CD8-positive, alpha-beta memory T cell (primary cell): ENCODE measurements at regions of chr9 and their contacts with region 1.

Region 1: GRCh38 chr9:74773886-74774479 is 113.7 kb downstream of the TRPM6 start:
- DNase-seq: peak; percentile 46 to 75 (median 56)
- H3K4me3 ChIP-seq: no peak overlapping the region
- H3K4me3 Mint-ChIP-seq: no peak overlapping the region
- H3K27ac ChIP-seq: no peak overlapping the region
- H3K27ac Mint-ChIP-seq: no peak overlapping the region
- H3K4me1 ChIP-seq: no peaks in the 10 kb centered on the region
- H3K4me1 Mint-ChIP-seq: no peaks in the 10 kb centered on the region
- H3K27me3 ChIP-seq: no peaks in the 10 kb centered on the region
- H3K27me3 Mint-ChIP-seq: peaks cover 14% of the 10 kb centered on the region in 2 donors

Region 2: DNA sequence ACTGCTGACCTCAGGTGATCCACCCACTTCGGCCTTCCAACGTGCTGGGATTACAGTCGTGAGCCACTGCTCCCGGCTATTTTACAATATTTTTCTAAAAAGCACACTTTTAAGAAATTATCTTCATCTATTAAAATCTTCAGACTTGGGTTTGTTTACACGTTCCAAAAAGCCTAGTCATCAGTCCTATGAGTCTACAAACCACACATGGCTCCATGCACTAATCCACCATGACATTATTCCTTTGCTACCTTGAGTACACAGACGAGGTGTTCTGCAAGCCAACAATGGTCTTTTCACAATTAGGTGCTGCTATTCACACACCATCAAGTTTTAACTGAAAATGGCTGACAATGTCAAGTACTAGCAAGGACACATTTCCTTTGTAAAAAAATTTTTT is 72.8 kb after region 1 on chr9:
- CTCF ChIA-PET with region 1: no interaction called
- POLR2A ChIA-PET with region 1: no interaction called
- DNase-seq: no peak
- H3K4me3 ChIP-seq: no peak overlapping the region
- H3K4me3 Mint-ChIP-seq: no peak overlapping the region
- H3K27ac ChIP-seq: no peak overlapping the region
- H3K27ac Mint-ChIP-seq: no peak overlapping the region
- H3K4me1 ChIP-seq: no peaks in the 10 kb centered on the region
- H3K4me1 Mint-ChIP-seq: peaks cover 0 to 7% (median 0%) of the 10 kb centered on the region in 3 donors
- H3K27me3 ChIP-seq: no peaks in the 10 kb centered on the region
- H3K27me3 Mint-ChIP-seq: peaks cover 6% of the 10 kb centered on the region in 2 donors

Region 3: GRCh38 chr9:75001719-75002422 is 227.9 kb after region 1 on chr9:
- CTCF ChIA-PET with region 1: interaction called, 91 read pairs
- POLR2A ChIA-PET with region 1: no interaction called
- DNase-seq: peak in 2 of 5 donors; percentile 59 to 64
- H3K4me3 ChIP-seq: no peak overlapping the region
- H3K4me3 Mint-ChIP-seq: no peak overlapping the region
- H3K27ac ChIP-seq: no peak overlapping the region
- H3K27ac Mint-ChIP-seq: no peak overlapping the region
- H3K4me1 ChIP-seq: no peaks in the 10 kb centered on the region
- H3K4me1 Mint-ChIP-seq: peaks cover 0 to 10% (median 5%) of the 10 kb centered on the region in 3 donors
- H3K27me3 ChIP-seq: no peaks in the 10 kb centered on the region
- H3K27me3 Mint-ChIP-seq: no peaks in the 10 kb centered on the region

Region 4: GRCh38 chr9:75071530-75072124 is 297.6 kb after region 1 on chr9:
- CTCF ChIA-PET with region 1: interaction called, 50 read pairs
- POLR2A ChIA-PET with region 1: no interaction called
- DNase-seq: peak in 4 of 5 donors; percentile 16 to 68 (median 25)
- H3K4me3 ChIP-seq: no peak overlapping the region
- H3K4me3 Mint-ChIP-seq: no peak overlapping the region
- H3K27ac ChIP-seq: no peak overlapping the region
- H3K27ac Mint-ChIP-seq: peak overlapping the region in 6 of 8 donors; percentile 15 to 91 (median 52)
- H3K4me1 ChIP-seq: peaks cover 7% of the 10 kb centered on the region
- H3K4me1 Mint-ChIP-seq: peaks cover 13 to 15% (median 15%) of the 10 kb centered on the region in 3 donors
- H3K27me3 ChIP-seq: no peaks in the 10 kb centered on the region
- H3K27me3 Mint-ChIP-seq: no peaks in the 10 kb centered on the region

Region 5: DNA sequence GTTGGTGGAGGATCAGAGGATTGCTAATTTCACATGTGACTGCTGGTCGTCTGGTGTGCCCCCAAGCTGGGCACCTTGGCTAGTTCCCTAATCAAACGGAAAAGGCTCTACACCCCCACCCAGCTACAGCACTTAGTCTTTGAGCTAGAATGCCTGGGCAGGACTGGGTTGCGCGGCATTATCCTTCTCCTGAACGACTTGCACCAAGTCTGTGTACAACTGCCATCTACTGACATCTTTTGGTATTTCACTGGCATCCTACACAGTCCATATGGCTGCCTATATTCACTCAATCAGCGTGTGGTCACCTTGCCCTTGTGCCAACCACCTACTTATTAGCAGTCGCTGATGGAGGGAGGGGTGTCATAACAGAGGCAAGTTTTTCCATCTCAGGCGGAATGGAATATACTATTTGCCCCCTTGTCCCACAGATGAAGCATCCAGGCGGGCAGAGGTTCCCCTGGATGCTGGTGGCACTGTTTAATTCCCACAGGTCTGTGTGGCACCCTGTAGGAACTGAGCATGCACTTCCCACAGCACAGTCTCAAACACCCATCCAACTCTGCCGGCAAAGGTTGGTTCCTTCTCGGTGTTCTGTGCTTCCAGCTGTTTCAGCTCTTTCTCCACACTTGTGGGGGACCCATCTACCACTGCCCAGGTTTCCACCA is 464.5 kb after region 1 on chr9:
- CTCF ChIA-PET with region 1: interaction called, 10 read pairs
- POLR2A ChIA-PET with region 1: no interaction called
- DNase-seq: peak; percentile 12 to 56 (median 30)
- H3K4me3 ChIP-seq: no peak overlapping the region
- H3K4me3 Mint-ChIP-seq: peak overlapping the region in 1 of 7 donors; percentile 45
- H3K27ac ChIP-seq: no peak overlapping the region
- H3K27ac Mint-ChIP-seq: peak overlapping the region in 1 of 8 donors; percentile 54
- H3K4me1 ChIP-seq: no peaks in the 10 kb centered on the region
- H3K4me1 Mint-ChIP-seq: peaks cover 0 to 5% (median 4%) of the 10 kb centered on the region in 3 donors
- H3K27me3 ChIP-seq: no peaks in the 10 kb centered on the region
- H3K27me3 Mint-ChIP-seq: no peaks in the 10 kb centered on the region